Activated CD4-positive, alpha-beta memory T cell treated with anti-CD3 and anti-CD28 coated beads, Interleukin-2, amount 10 ng/mL, durations not matched to agents 7 days and 5 days (primary cell): ENCODE measurements at regions of chr17 and their contacts with region 1.

Region 1: GRCh38 chr17:31494259-31495021 is 103.0 kb downstream of the RAB11FIP4 start:
- DNase-seq: peak; percentile 81
- H3K4me3 Mint-ChIP-seq: peak overlapping the region; percentile 54
- H3K27ac Mint-ChIP-seq: peak overlapping the region; percentile 99
- H3K4me1 Mint-ChIP-seq: peaks cover 74% of the 10 kb centered on the region
- H3K27me3 Mint-ChIP-seq: no peaks in the 10 kb centered on the region

Region 2: GRCh38 chr17:31321481-31321880 is 173.0 kb before region 1 on chr17 and contains the start of gene EVI2A:
- CTCF ChIA-PET with region 1: no interaction called
- POLR2A ChIA-PET with region 1: interaction called, 10 read pairs
- DNase-seq: peak; percentile 86
- H3K4me3 Mint-ChIP-seq: peak within 1 kb of the TSS; percentile 79
- H3K27ac Mint-ChIP-seq: peak within 1 kb of the TSS; percentile 99
- H3K4me1 Mint-ChIP-seq: peaks cover 30% of the 10 kb centered on the region
- H3K27me3 Mint-ChIP-seq: no peaks in the 10 kb centered on the region
- total RNA-seq, gene EVI2A: 109 to 110 TPM

Region 3: DNA sequence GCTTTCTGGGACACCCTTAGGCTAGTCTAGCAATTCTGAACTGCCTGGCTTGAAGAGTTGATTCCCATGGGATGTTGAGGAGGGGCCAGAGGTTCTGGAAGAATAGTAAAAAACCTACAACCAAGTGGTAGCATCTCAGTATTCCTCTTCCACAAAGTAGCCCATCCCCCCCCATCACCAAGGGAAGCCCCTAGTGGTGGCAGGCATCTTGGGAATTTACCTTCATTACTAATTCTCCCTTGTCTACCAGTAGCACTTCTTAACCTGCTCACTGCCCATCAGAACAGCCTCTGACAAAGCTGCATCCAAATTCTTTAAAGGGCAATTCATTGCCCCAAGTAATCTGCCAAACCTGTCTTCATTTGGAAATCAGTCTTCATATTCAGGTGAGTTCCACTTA is 115.8 kb before region 1 on chr17:
- CTCF ChIA-PET with region 1: no interaction called
- POLR2A ChIA-PET with region 1: no interaction called
- DNase-seq: no peak
- H3K4me3 Mint-ChIP-seq: no peak overlapping the region
- H3K27ac Mint-ChIP-seq: no peak overlapping the region
- H3K4me1 Mint-ChIP-seq: no peaks in the 10 kb centered on the region
- H3K27me3 Mint-ChIP-seq: no peaks in the 10 kb centered on the region

Region 4: GRCh38 chr17:31481783-31482081 is 12.7 kb before region 1 on chr17:
- CTCF ChIA-PET with region 1: no interaction called
- POLR2A ChIA-PET with region 1: interaction called, 17 read pairs
- DNase-seq: no peak
- H3K4me3 Mint-ChIP-seq: no peak overlapping the region
- H3K27ac Mint-ChIP-seq: no peak overlapping the region
- H3K4me1 Mint-ChIP-seq: peaks cover 3% of the 10 kb centered on the region
- H3K27me3 Mint-ChIP-seq: peaks cover 6% of the 10 kb centered on the region

Region 5: DNA sequence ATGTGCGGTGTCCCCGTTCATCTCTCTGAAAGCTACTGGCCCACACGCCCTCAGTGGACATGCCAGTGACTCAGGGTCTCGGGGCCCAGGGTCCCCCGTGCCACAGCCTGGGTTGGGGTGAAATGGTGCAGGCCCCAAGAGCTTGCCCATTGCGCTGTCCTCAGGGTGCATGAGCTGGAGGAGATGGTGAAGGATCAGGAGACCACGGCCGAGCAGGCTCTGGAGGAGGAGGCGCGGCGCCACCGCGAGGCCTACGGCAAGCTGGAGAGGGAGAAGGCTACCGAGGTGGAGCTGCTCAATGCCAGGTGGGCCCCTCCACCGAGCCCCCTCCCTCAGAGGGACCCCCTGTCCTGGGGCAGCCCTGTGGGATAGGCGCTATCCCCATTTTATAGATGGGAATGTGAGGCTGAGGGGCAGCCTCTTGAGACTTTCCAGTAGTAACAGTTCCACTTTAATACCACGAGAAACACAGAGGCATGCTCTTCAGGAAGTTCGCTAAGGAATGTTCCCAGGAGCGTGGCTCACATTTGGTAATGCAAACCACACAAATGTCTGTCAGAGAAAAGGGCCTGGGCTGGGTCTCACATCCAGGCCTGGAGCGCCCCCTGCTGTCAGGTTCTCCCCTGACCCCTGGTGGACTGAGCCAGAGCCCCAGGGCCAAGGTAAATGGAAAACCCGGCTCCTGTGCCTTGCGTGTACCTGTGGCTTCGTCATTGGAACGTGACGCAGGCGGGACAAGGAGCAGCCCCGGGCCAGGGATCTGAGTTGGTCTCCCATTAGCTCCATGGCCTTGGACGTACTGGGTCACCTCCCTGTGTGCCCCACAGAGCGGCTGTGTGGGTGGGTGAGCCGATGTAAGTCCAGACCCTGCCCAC is 30.7 kb after region 1 on chr17:
- CTCF ChIA-PET with region 1: no interaction called
- POLR2A ChIA-PET with region 1: no interaction called
- DNase-seq: peak; percentile 85
- H3K4me3 Mint-ChIP-seq: no peak overlapping the region
- H3K27ac Mint-ChIP-seq: no peak overlapping the region
- H3K4me1 Mint-ChIP-seq: no peaks in the 10 kb centered on the region
- H3K27me3 Mint-ChIP-seq: no peaks in the 10 kb centered on the region